Psoas muscle (tissue), 8 donors: ENCODE measurements at regions of chr1 and their contacts with region 1.

Region 1: DNA sequence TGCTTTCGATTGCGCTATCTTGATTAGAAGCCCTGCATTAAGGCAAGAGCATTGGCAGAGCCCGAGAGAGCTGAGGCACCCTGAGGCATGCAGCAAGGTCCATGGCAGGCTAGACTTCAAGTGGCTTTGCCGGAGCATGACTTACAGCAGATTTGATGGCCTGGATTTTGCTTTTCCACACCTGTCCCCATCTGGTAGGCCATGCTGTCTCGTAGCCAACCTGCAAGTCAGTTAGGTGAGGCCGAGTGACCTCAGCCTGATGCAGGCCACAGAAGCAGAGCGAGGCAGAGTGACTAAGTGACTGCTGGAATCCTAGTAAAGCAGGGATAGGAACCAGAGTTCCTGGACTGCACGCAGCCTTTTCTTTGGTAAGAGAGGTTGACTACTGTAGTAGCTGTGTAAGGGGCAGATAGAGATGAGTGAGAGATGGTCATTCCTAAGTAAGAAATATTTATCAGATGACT is 148.9 kb downstream of the PBX1 start:
- DNase-seq: peak; percentile 68 to 81
- ATAC-seq: peak; percentile 85 to 95 (median 92)
- H3K4me3 ChIP-seq: peak overlapping the region; percentile 15
- H3K27ac ChIP-seq: peak overlapping the region; percentile 88
- H3K4me1 ChIP-seq: peaks cover 51% of the 10 kb centered on the region
- H3K27me3 ChIP-seq: no peaks in the 10 kb centered on the region
- CTCF ChIP-seq: no peak

Region 2: GRCh38 chr1:164637461-164638375 is 70.2 kb before region 1 on chr1:
- intact Hi-C with region 1: loop called in 1 of 2 experiments (anchors 5 kb)
- DNase-seq: no peak
- ATAC-seq: peak; percentile 18 to 57 (median 38)
- H3K4me3 ChIP-seq: peak overlapping the region; percentile 22
- H3K27ac ChIP-seq: peak overlapping the region; percentile 95
- H3K4me1 ChIP-seq: peaks cover 83% of the 10 kb centered on the region
- H3K27me3 ChIP-seq: no peaks in the 10 kb centered on the region
- CTCF ChIP-seq: no peak

Region 3: DNA sequence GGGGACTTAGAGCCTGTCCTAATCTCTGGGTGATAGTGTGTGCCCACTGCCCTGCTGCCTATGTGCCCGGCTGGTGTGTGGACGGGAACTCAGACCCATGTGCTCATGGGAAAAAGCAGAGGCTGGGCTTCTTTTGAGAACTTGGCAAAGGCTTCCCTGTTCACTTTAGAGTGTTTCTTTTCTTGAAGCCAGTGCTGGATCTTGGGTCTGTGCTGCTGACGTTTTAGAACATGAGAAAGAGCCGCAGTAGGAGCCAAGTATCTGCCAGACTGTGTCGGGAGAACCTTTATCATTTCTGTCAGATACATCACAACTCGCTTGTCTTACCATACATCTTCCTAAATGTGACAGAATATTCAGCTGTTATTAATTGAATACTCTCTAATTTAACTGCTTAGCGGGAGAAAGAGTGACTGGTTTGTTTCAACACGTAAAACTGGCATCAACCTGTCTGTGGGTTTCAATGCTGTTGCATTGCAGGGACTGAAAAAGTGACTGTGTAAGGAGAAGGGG is 46.2 kb after region 1 on chr1:
- intact Hi-C with region 1: loop called in 1 of 2 experiments (anchors 5 kb)
- DNase-seq: no peak
- ATAC-seq: peak; percentile 76 to 89 (median 84)
- H3K4me3 ChIP-seq: peak overlapping the region; percentile 45
- H3K27ac ChIP-seq: peak overlapping the region; percentile 89
- H3K4me1 ChIP-seq: peaks cover 52% of the 10 kb centered on the region
- H3K27me3 ChIP-seq: no peaks in the 10 kb centered on the region
- CTCF ChIP-seq: no peak

Region 4: GRCh38 chr1:164772635-164773034 is 64.7 kb after region 1 on chr1:
- intact Hi-C with region 1: loop called in 1 of 2 experiments (anchors 5 kb)
- DNase-seq: peak; percentile 77 to 87
- ATAC-seq: peak; percentile 93 to 98 (median 96)
- H3K4me3 ChIP-seq: no peak overlapping the region
- H3K27ac ChIP-seq: peak overlapping the region; percentile 89
- H3K4me1 ChIP-seq: peaks cover 54% of the 10 kb centered on the region
- H3K27me3 ChIP-seq: no peaks in the 10 kb centered on the region
- CTCF ChIP-seq: no peak

Region 5: GRCh38 chr1:164786980-164787833 is 79.3 kb after region 1 on chr1:
- intact Hi-C with region 1: loop called in 1 of 2 experiments (anchors 5 kb)
- DNase-seq: peak; percentile 83 to 91
- ATAC-seq: peak; percentile 89 to 94 (median 92)
- H3K4me3 ChIP-seq: peak overlapping the region; percentile 48
- H3K27ac ChIP-seq: peak overlapping the region; percentile 83
- H3K4me1 ChIP-seq: peaks cover 56% of the 10 kb centered on the region
- H3K27me3 ChIP-seq: no peaks in the 10 kb centered on the region
- CTCF ChIP-seq: peak; percentile 91

Region 6: GRCh38 chr1:164969253-164969652 is 261.4 kb after region 1 on chr1:
- intact Hi-C with region 1: no loop called
- DNase-seq: no peak
- ATAC-seq: no peak
- H3K4me3 ChIP-seq: no peak overlapping the region
- H3K27ac ChIP-seq: no peak overlapping the region
- H3K4me1 ChIP-seq: no peaks in the 10 kb centered on the region
- H3K27me3 ChIP-seq: peaks cover 0 to 4% (median 0%) of the 10 kb centered on the region in 3 donors
- CTCF ChIP-seq: no peak